Heart left ventricle (tissue), 16 donors: ENCODE measurements at regions of chr12 and their contacts with region 1.

Region 1: GRCh38 chr12:44668443-44668842 is 207.7 kb downstream of the NELL2 start:
- DNase-seq: no peak
- ATAC-seq: no peak
- H3K4me3 ChIP-seq: no peak overlapping the region
- H3K27ac ChIP-seq: no peak overlapping the region
- H3K4me1 ChIP-seq: no peaks in the 10 kb centered on the region
- H3K27me3 ChIP-seq: peaks cover 0 to 4% (median 0%) of the 10 kb centered on the region in 9 donors
- CTCF ChIP-seq: no peak
- POLR2A ChIP-seq: no peak

Region 2: DNA sequence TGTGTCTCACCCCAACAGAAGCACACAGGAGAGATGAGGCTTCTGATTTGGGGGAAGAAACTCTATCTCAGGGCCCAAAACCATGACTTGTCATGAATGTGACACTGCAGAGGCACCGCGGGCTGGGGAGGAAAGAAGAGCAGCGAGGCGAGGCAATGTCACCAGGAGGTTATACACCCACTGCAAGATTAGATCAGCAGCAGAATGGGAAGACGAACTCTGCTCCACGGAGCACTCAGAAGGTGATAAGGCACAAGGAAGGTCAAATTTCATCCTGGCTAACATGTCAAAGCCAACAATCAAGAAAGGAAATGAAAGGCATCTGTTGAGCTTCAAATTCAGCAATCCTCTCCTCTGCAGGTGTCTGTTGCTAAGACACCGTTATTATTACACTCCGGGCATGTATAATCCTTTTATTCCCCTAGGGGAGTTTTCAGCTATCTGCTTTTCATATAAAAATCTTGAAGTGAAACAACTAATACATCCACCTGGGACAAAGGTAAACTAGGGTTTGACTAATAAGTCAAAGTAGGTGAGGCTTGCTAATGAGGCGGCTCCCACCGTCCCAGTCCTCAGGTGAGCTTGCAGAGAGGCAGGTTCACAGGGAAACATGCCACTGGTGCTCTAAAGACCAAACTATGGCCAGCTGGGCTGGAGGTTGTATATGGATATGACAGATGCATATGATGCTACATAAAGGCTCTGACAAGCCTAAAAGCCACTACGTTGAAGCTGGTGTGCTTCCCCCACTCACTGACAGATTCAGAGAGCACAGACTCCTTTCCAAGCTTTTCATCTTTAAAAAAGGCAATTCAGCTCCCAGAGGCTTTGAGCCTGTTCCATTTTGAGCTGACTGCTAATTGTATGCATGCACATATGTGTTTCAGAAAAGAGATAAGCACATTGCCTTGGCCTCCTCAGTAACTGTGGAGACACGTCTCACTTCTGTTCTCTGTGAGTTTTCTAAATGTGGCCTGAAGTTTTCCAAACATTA is 13.5 kb before region 1 on chr12:
- intact Hi-C with region 1: loop called in 1 of 10 experiments (anchors 1 kb)
- DNase-seq: no peak
- ATAC-seq: no peak
- H3K4me3 ChIP-seq: no peak overlapping the region
- H3K27ac ChIP-seq: no peak overlapping the region
- H3K4me1 ChIP-seq: no peaks in the 10 kb centered on the region
- H3K27me3 ChIP-seq: peaks cover 0 to 4% (median 0%) of the 10 kb centered on the region in 9 donors
- CTCF ChIP-seq: no peak
- POLR2A ChIP-seq: no peak